ENCODE measurements at regions of chr16 and their contacts with region 1.

Region 1: GRCh38 chr16:88442727-88443576 is 10.1 kb upstream of the ZFPM1 start:
- DNase-seq: peak; percentile 94
- H3K4me3 ChIP-seq: peak overlapping the region in 1 of 8 donors; percentile 10
- H3K27ac ChIP-seq: no peak overlapping the region
- H3K4me1 ChIP-seq: peaks cover 4 to 25% (median 15%) of the 10 kb centered on the region in 6 donors
- H3K27me3 ChIP-seq: no peaks in the 10 kb centered on the region
- CTCF ChIP-seq: peak; percentile 89 to 98 (median 97)
- POLR2A ChIP-seq: no peak

Region 2: GRCh38 chr16:88527937-88528743 is 85.2 kb after region 1 on chr16:
- intact Hi-C with region 1: loop called (anchors 2 kb)
- DNase-seq: no peak
- H3K4me3 ChIP-seq: no peak overlapping the region
- H3K27ac ChIP-seq: peak overlapping the region in 3 of 8 donors; percentile 68 to 84 (median 81)
- H3K4me1 ChIP-seq: peaks cover 22 to 72% (median 57%) of the 10 kb centered on the region in 6 donors
- H3K27me3 ChIP-seq: peaks cover 0 to 14% (median 0%) of the 10 kb centered on the region in 7 donors
- CTCF ChIP-seq: no peak
- POLR2A ChIP-seq: no peak

Region 3: GRCh38 chr16:88561485-88562369 is 118.8 kb after region 1 on chr16:
- intact Hi-C with region 1: loop called (anchors 1 kb)
- DNase-seq: no peak
- H3K4me3 ChIP-seq: peak overlapping the region in 2 of 8 donors; percentile 14 to 35
- H3K27ac ChIP-seq: no peak overlapping the region
- H3K4me1 ChIP-seq: peaks cover 0 to 35% (median 13%) of the 10 kb centered on the region in 6 donors
- H3K27me3 ChIP-seq: peaks cover 0 to 15% (median 0%) of the 10 kb centered on the region in 7 donors
- CTCF ChIP-seq: peak; percentile 46 to 84 (median 70)
- POLR2A ChIP-seq: no peak

Region 4: GRCh38 chr16:88662843-88663606 is 220.1 kb after region 1 on chr16 and contains the start of gene MVD:
- intact Hi-C with region 1: no loop called
- DNase-seq: peak; percentile 97
- H3K4me3 ChIP-seq: peak within 1 kb of the TSS; percentile 51 to 95 (median 84)
- H3K27ac ChIP-seq: peak within 1 kb of the TSS; percentile 77 to 97 (median 90)
- H3K4me1 ChIP-seq: peaks cover 16 to 52% (median 36%) of the 10 kb centered on the region in 6 donors
- H3K27me3 ChIP-seq: no peaks in the 10 kb centered on the region
- CTCF ChIP-seq: peak in 1 of 11 experiments; percentile 55
- POLR2A ChIP-seq: peak in 1 of 3 donors; percentile 76
- total RNA-seq, gene MVD: 24.1 to 49.3 (median 35.1) TPM